ENCODE measurements at regions of chr3 and their contacts with region 1.

Region 1: DNA sequence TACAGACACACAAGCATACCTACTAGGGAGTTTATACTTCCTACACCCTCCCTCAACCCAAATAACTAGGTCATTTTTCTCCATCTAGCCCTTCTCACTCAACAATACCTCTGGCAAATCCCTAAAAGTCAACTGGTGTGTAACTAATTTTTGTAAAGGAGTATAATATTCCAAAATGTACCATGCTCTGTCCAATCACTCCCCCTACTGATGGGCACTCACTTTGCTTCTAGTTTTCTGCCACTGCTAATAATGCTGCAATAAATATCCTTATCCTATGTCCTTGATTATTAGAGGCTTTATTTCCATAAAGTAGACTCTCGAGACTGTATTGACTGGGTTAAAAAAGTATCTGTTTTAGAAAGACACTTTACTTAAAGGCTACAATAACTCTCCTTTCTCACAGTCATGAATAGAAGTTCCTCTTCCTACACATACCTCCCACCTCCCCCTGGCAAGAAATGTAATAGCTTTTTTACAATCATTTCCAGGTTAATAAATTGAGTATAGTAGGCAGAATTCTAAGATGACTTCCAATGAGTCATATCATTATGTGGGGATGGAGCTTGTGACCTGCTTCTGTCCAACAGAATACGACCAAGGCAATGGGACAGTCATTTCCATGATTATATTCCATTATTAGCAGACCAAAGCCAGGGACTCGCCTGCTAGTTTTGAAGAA is 30.0 kb downstream of the SHQ1 start:
- H3K4me3 Mint-ChIP-seq: no peak overlapping the region
- H3K27ac Mint-ChIP-seq: no peak overlapping the region
- H3K4me1 Mint-ChIP-seq: peaks cover 13% of the 10 kb centered on the region
- H3K27me3 Mint-ChIP-seq: no peaks in the 10 kb centered on the region

Region 2: GRCh38 chr3:71710906-71711494 is 1107.2 kb before region 1 on chr3:
- intact Hi-C with region 1: loop called (anchors 5 kb)
- H3K4me3 Mint-ChIP-seq: no peak overlapping the region
- H3K27ac Mint-ChIP-seq: no peak overlapping the region
- H3K4me1 Mint-ChIP-seq: peaks cover 24% of the 10 kb centered on the region
- H3K27me3 Mint-ChIP-seq: no peaks in the 10 kb centered on the region

Region 3: DNA sequence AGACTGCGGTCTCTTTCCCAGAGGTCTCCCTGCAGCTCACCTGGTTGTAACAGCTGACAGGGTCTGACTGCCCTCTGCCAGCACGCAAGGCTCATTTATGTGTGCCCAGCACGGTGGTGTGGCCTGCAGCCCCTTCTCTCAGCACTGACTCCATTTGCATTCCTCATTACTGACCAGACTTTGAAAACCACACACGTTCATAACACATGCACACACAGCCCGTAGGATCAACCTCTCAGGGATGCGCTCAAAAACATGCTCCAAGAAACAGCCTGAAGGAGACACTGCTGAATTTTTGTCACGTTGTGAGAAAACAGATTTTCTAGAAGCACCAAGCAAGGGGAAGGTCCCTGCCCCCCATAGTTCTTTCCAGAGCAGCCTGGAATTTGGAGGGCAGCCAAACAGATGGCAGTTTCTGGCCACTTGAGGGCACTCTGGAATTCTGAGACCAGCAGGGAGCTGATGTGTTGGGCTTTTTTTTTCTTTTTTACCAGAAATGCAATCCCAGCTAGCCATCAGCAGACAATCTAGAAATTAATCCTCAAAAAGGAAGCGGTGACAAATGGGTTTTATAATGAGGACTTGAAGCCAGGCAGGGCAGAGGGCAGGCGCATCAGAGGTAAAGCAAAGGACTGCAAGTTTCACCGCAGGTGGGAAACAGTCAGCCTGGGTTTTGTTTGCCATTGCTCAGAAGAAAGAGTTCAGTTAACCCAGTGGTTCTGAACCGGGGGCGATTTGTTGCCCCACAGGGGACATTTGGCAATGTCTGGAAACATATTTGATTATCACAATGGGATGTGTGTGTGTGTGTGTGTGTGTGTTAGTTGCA is 862.8 kb before region 1 on chr3:
- intact Hi-C with region 1: loop called (anchors 5 kb)
- H3K4me3 Mint-ChIP-seq: no peak overlapping the region
- H3K27ac Mint-ChIP-seq: no peak overlapping the region
- H3K4me1 Mint-ChIP-seq: peaks cover 13% of the 10 kb centered on the region
- H3K27me3 Mint-ChIP-seq: peaks cover 58% of the 10 kb centered on the region

Region 4: GRCh38 chr3:72270072-72270681 is 548.1 kb before region 1 on chr3:
- intact Hi-C with region 1: loop called (anchors 10 kb)
- H3K4me3 Mint-ChIP-seq: no peak overlapping the region
- H3K27ac Mint-ChIP-seq: peak overlapping the region; percentile 77
- H3K4me1 Mint-ChIP-seq: peaks cover 79% of the 10 kb centered on the region
- H3K27me3 Mint-ChIP-seq: peaks cover 19% of the 10 kb centered on the region

Region 5: DNA sequence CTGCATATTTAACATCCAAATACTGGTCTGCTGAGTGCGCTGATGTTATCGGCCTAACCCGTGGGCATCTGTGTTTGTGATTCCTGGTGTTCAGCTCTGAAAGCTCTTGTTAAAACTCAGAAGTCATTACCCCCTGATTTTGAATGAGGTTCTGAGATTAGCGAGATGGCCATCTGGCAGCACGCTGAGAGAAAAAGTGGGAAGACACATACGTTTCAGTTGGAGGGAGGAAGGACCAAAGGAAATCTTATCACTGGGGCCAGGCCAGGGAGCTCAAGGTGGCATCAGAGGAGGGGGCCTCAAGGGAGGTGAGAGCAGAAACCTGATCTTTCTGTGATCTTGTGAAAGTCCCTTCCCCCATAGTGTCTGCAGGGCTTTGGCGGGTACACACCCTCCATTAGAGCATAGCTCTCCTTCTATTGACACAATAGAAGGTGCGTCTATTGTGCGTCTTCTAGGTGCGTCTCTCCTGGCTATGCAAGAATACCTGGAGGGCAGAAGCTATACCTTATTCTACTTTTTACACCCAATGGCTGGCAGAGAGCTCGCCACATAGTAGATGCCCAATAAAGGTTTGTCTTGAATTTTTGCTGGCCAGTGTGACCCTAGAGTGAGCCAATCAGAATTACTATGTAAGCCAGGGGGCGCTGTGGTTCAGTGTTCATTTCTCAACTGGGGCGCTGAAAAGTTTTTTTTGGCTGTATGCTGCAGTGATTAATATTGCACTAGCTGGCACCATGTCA is 152.4 kb before region 1 on chr3:
- intact Hi-C with region 1: loop called (anchors 5 kb)
- H3K4me3 Mint-ChIP-seq: no peak overlapping the region
- H3K27ac Mint-ChIP-seq: no peak overlapping the region
- H3K4me1 Mint-ChIP-seq: peaks cover 3% of the 10 kb centered on the region
- H3K27me3 Mint-ChIP-seq: peaks cover 21% of the 10 kb centered on the region

Measured in dendritic cell treated with granulocyte-macrophage colony-stimulating factor and Interleukin-4, amounts not matched to agents 40 ng/mL and 50 ng/mL, for 4 days (primary cell).